Activated CD8-positive, alpha-beta T cell treated with anti-CD3 and anti-CD28 coated beads, Interleukin-2, amount 10 ng/mL, durations not matched to agents 7 days and 5 days (primary cell): ENCODE measurements at regions of chr16 and their contacts with region 1.

Region 1: DNA sequence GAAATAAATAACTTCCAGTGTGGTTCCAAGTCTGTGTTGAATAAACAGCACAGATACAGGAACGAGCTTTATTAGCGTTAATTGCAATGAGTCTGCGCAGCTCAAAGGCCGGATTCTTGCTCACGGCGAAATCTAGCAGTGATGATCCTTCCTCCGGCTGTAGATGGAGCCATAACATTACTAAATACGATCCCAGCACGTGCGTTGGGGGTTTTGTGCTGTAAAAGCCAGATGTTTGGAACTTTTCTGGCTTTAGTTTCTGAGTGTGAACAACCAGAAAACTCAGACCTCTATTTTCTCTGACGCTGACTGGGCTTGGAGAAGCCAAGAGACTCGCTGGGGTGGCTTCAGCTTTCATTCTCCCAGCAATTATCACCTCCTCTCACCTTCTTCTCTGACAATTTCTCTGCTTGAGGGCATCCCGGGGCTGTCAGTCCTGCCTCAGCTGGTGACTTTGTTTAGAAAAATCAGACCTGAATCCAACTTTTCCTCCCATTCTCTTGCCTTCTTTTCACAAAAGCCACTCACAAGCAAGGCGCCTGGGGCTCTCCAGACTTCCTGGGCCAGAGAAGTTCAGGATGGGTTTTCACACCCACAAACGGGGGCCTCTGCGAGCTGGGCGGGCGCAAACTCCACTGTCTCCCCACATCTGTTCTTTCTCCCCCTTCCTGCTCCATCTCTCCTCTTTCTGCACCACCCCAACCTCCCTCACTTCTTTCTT is 47.1 kb upstream of the AKTIP start:
- DNase-seq: peak; percentile 69
- ATAC-seq: peak; percentile 87
- H3K4me3 Mint-ChIP-seq: no peak overlapping the region
- H3K27ac Mint-ChIP-seq: no peak overlapping the region
- H3K4me1 Mint-ChIP-seq: peaks cover 44% of the 10 kb centered on the region
- H3K27me3 Mint-ChIP-seq: peaks cover 34% of the 10 kb centered on the region

Region 2: DNA sequence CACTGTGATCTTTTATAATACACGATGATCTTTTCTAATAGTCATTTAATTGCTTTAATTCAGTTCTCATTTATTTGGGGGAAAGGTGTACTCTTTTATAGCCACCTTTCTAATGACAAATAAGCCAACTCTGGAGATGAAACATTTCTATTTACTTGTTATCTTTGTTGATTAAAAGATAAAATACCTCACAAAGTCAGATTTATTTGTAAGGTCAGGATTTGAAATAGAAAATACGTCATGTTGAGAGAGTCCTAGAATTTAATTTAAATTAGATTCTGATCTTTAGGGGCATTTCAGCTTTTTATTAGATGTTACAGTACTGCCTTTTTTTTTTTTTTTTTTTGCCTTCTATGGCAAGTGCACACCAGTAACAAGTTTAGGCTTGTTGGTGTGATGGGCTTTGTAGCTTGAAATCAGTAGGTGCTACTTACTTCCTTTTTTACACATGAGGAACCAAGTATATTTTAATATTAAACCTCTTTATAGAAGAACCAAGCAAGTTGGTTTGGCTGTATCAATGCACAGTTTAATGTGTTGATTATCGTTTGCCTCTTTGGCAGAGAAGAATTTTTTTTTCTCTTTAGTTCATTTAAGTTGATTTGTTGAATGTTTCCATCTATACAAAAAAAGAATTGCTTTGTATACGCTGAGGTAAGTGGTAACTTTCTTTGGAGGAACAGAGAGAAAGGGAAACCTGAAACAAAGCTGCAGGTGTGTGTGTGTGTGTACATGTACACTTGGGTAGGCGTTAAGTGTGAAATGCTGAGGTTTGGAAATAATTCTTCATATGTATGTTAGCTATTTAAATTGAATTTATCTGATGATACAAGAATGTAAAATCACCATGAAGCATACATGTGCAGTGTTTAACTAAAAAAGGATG is 100.3 kb before region 1 on chr16:
- CTCF ChIA-PET with region 1: no interaction called
- POLR2A ChIA-PET with region 1: no interaction called
- DNase-seq: no peak
- ATAC-seq: no peak
- H3K4me3 Mint-ChIP-seq: peak overlapping the region; percentile 67
- H3K27ac Mint-ChIP-seq: peak overlapping the region; percentile 72
- H3K4me1 Mint-ChIP-seq: peaks cover 57% of the 10 kb centered on the region
- H3K27me3 Mint-ChIP-seq: no peaks in the 10 kb centered on the region

Region 3: GRCh38 chr16:53518550-53519416 is 31.3 kb before region 1 on chr16:
- CTCF ChIA-PET with region 1: interaction called, 13 read pairs
- POLR2A ChIA-PET with region 1: no interaction called
- DNase-seq: peak; percentile 93
- ATAC-seq: peak; percentile 90
- H3K4me3 Mint-ChIP-seq: peak overlapping the region; percentile 75
- H3K27ac Mint-ChIP-seq: peak overlapping the region; percentile 94
- H3K4me1 Mint-ChIP-seq: peaks cover 62% of the 10 kb centered on the region
- H3K27me3 Mint-ChIP-seq: no peaks in the 10 kb centered on the region

Region 4: DNA sequence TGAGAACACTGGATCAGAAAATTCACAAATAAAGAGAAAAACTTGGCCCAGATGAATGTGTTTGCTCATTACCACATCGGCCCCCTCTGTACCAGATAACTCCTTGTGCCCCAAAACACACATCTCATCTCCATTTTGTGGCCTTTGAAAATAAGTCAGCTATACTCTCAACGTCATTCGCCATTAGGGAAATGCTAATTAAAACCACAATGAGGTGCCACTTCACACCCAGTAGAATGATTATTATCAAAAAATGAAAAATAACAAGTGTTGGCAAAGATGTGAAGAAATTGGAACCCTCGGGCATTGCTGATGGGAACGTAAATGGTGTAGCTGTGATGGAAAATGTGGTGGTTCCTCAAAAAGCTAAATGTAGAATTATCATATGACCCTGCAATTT is 12.5 kb before region 1 on chr16:
- CTCF ChIA-PET with region 1: interaction called, 22 read pairs
- POLR2A ChIA-PET with region 1: no interaction called
- DNase-seq: no peak
- ATAC-seq: no peak
- H3K4me3 Mint-ChIP-seq: no peak overlapping the region
- H3K27ac Mint-ChIP-seq: no peak overlapping the region
- H3K4me1 Mint-ChIP-seq: peaks cover 1% of the 10 kb centered on the region
- H3K27me3 Mint-ChIP-seq: peaks cover 4% of the 10 kb centered on the region

Region 5: GRCh38 chr16:53629607-53630312 is 79.6 kb after region 1 on chr16:
- CTCF ChIA-PET with region 1: no interaction called
- POLR2A ChIA-PET with region 1: no interaction called
- DNase-seq: no peak
- ATAC-seq: no peak
- H3K4me3 Mint-ChIP-seq: no peak overlapping the region
- H3K27ac Mint-ChIP-seq: no peak overlapping the region
- H3K4me1 Mint-ChIP-seq: no peaks in the 10 kb centered on the region
- H3K27me3 Mint-ChIP-seq: no peaks in the 10 kb centered on the region

Region 6: DNA sequence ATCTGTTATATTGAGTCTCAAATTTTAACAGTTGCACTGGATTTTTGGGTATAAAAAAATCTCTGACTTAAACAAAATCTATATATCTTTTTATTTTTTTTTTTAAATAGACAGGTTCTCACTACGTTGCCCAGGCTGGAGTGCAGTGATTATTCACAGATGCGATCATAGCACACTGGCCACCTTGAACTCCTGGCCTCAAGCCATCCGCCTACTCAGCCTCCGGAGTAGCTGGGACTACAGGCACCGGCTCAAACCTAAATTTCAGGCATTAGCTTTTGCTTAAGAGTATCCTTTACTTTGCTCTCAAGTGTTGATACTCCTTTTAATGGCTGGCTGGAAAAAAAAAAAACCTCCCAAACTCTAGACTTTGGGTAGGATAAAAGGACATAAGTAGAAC is 92.0 kb after region 1 on chr16:
- CTCF ChIA-PET with region 1: no interaction called
- POLR2A ChIA-PET with region 1: no interaction called
- DNase-seq: no peak
- ATAC-seq: no peak
- H3K4me3 Mint-ChIP-seq: no peak overlapping the region
- H3K27ac Mint-ChIP-seq: no peak overlapping the region
- H3K4me1 Mint-ChIP-seq: no peaks in the 10 kb centered on the region
- H3K27me3 Mint-ChIP-seq: no peaks in the 10 kb centered on the region